ENCODE measurements at regions of chr16 and their contacts with region 1.

Region 1: GRCh38 chr16:71676236-71676635 is 48.3 kb downstream of the PHLPP2 start:
- DNase-seq: no peak
- ATAC-seq: no peak
- H3K4me3 ChIP-seq: no peak overlapping the region
- H3K27ac ChIP-seq: no peak overlapping the region
- H3K4me1 ChIP-seq: no peaks in the 10 kb centered on the region
- H3K27me3 ChIP-seq: no peaks in the 10 kb centered on the region
- CTCF ChIP-seq: no peak

Region 2: DNA sequence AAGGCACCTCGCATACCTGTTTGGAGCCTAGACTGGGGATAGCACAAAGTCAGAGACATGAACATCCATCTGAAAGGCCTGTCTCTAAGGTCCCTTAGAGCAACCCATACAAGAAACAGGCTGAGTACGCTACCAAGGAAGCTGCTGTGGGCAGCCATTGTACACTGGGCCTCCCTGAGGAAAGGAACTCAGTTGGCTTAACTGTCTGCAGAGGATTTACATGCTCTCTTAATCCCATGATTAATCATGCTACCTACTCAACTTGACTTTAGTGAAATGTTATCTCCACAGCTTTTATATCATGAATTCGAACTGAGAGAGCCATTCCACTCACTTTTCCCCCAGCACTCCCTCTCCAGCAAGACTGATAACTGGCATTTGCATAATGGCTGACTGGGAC is 22.3 kb after region 1 on chr16:
- intact Hi-C with region 1: loop called in 1 of 2 experiments (anchors 2 kb)
- DNase-seq: no peak
- ATAC-seq: no peak
- H3K4me3 ChIP-seq: no peak overlapping the region
- H3K27ac ChIP-seq: no peak overlapping the region
- H3K4me1 ChIP-seq: no peaks in the 10 kb centered on the region
- H3K27me3 ChIP-seq: no peaks in the 10 kb centered on the region
- CTCF ChIP-seq: no peak

Region 3: GRCh38 chr16:71826533-71827017 is 150.3 kb after region 1 on chr16:
- intact Hi-C with region 1: no loop called
- DNase-seq: no peak
- ATAC-seq: no peak
- H3K4me3 ChIP-seq: no peak overlapping the region
- H3K27ac ChIP-seq: no peak overlapping the region
- H3K4me1 ChIP-seq: no peaks in the 10 kb centered on the region
- H3K27me3 ChIP-seq: no peaks in the 10 kb centered on the region
- CTCF ChIP-seq: no peak